ENCODE measurements at regions of chr20 and their contacts with region 1.

Region 1: DNA sequence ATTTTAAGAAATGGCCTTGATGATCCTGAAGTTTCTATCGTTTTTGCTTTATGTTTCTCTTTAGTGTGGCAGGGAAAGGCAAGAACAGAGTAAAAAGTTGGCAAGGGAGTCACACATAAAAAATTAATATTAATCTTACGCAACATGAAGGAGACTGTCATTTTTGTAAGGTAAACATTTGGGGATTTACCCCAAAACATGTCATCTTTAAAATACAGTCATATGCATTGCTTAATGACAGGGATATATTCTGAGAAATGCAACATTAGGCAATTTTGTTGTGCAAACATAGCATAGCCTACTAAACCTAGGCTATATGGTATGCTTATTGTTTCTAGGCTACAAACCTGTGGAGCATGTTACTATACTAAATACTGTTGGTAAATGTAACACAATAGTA is 5.4 kb downstream of the RBL1 start:
- DNase-seq: no peak
- H3K4me3 ChIP-seq: no peak overlapping the region
- H3K27ac ChIP-seq: no peak overlapping the region
- H3K4me1 ChIP-seq: peaks cover 9% of the 10 kb centered on the region
- H3K27me3 ChIP-seq: no peaks in the 10 kb centered on the region
- CTCF ChIP-seq: no peak

Region 2: DNA sequence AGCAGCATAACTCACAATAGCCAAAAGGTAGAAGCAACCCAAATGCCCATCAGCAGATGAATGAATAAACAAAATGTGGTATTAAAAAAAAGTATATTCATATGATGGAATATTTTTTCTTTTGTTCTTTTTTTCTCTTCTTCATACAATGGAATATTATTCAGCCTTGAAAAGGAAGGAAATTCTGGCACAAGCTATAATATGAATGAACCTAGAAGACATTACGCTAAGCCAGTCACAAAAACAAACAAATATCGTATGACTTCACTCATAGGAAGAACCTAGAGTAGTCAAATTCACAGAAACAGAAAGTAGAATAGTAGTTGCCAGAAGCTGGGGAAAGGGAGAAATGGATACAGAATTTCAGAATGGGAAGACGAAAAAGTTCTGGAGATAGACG is 58.3 kb before region 1 on chr20:
- CTCF ChIA-PET with region 1: no interaction called
- POLR2A ChIA-PET with region 1: interaction called, 11 read pairs
- intact Hi-C with region 1: no loop called
- DNase-seq: no peak
- H3K4me3 ChIP-seq: no peak overlapping the region
- H3K27ac ChIP-seq: no peak overlapping the region
- H3K4me1 ChIP-seq: no peaks in the 10 kb centered on the region
- H3K27me3 ChIP-seq: no peaks in the 10 kb centered on the region
- CTCF ChIP-seq: no peak